ENCODE measurements at regions of chr19 and their contacts with region 1.

Region 1: DNA sequence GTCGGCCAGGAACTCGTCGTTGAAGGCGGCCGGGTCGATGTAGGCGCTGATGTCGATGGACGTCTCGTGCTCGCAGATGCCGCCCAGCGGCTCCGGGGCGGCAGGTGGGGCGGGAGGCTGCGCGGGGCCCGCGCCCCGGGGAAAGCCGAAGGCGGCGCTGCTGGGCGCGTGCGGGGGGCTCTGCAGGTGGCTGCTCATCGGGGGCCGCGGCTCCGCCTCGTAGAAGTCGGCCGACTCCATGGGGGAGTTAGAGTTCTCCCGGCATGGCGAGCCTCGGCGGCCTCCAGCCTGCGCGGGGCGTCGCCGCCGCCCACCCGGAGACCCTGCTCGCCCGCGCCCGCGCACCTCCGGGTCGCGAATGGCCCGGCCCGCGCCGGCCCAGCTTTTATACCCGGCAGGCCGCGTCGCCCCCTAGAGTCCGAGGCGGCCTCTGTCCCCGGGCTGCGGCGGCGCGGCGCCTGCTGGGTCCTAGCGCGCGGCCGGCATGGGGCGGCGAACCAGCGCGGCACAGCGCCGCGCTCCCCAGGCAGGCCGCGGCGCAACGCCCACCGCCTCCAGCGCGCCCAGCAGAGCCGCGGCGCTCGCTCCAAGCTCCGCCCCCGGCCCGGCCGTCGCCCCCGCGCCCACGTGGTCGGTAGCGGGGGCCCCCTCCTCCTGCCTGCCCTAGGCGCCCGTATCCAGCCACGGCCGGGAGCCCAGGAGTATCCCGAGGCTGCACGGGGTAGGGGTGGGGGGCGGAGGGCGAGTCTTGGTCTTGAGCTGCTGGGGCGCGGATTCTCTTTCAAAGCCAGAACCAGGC is at the start of gene CEBPA:
- DNase-seq: peak; percentile 70
- ATAC-seq: peak; percentile 93
- H3K4me3 ChIP-seq: peak within 1 kb of the TSS; percentile 70 to 82
- H3K27ac ChIP-seq: peak within 1 kb of the TSS; percentile 84
- H3K4me1 ChIP-seq: peaks cover 16 to 28% of the 10 kb centered on the region in 2 experiments; a peak in 3 of 4 replicates
- H3K27me3 ChIP-seq: no peaks in the 10 kb centered on the region
- CTCF ChIP-seq: peak in 2 of 3 experiments; percentile 24 to 59; a peak in 3 of 6 replicates
- POLR2A ChIP-seq: peak; percentile 99
- RAD21 ChIP-seq: no peak
- total RNA-seq, gene CEBPA: 7.0 TPM

Region 2: DNA sequence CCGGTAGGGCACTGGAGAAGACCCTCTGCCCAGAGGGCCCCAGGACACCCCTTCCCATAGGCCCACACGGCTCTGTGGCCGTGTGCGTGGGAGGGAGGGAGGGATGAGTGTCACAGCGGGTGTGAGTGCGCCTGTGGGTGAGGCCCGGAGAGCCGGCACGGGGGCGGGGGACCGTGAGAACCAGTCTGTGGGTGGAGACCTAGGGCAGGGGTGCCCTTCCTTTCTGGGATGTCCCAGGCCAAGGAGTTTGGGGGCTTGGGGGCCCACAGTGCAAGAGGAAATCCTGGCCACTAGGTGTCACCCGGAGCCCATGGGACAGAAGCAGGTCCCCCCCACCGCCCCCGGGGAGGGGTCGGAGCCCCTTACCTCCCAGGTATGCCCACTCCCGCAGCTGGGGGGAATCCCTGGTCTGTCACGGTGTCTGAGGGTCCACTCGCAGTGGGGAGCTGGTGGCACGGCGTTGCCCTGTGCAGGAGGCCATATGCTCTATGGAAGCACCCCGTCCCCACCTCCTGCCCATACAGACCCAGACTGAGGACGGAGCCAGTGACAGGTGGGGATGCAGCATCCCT is 60.8 kb before region 1 on chr19:
- CTCF ChIA-PET with region 1: no interaction called
- POLR2A ChIA-PET with region 1: no interaction called
- RAD21 ChIA-PET with region 1: no interaction called
- intact Hi-C with region 1: loop called (anchors 5 kb)
- DNase-seq: no peak
- ATAC-seq: peak; percentile 77
- H3K4me3 ChIP-seq: no peak overlapping the region
- H3K27ac ChIP-seq: no peak overlapping the region
- H3K4me1 ChIP-seq: peaks cover 0 to 11% of the 10 kb centered on the region in 2 experiments; a peak in 2 of 4 replicates
- H3K27me3 ChIP-seq: no peaks in the 10 kb centered on the region
- CTCF ChIP-seq: peak; percentile 61 to 82 (median 78)
- POLR2A ChIP-seq: no peak
- RAD21 ChIP-seq: peak; percentile 93

Region 3: DNA sequence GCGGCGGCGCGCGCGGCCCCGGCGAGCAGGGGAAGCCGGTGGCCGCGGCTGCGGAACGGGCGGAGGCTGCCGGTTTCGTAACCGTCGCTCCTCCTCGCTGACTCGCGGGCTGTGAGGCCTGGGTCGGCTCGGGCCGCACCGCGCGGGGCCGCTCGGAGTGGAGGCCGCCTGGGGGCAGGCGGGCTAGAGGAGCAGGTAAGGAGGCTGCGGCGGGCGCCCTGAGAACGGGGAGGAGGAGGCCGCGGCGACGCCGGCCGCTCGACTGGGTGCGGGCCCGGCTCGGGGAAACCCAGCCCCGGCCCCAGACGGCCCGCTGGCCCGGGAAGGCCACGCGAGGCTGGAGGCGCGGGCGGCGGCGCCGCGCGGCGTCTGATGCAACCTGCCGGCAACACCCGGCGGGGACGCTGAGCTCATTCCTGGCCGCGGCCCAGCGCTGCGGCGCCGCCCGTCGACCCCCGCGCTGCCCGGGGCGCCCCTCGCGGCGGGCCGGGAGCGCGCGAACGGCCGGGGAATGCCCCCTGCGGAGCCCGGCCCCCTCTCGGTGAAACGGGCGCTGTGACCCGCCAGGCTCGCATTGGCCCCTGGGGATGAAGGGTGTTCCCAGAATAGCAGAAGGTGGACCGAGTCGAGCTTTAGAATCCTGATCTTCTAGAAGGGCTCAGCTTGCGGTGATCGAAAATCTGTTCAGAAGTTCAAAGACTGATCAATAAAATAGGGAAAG is 71.5 kb after region 1 on chr19 and contains the start of gene CEBPG:
- CTCF ChIA-PET with region 1: interaction called, 7 read pairs
- POLR2A ChIA-PET with region 1: interaction called, 17 read pairs
- RAD21 ChIA-PET with region 1: no interaction called
- intact Hi-C with region 1: loop called (anchors 2 kb)
- DNase-seq: no peak
- ATAC-seq: peak; percentile 40
- H3K4me3 ChIP-seq: peak within 1 kb of the TSS; percentile 90 to 94
- H3K27ac ChIP-seq: peak within 1 kb of the TSS; percentile 93
- H3K4me1 ChIP-seq: peaks cover 30 to 49% of the 10 kb centered on the region in 2 experiments
- H3K27me3 ChIP-seq: no peaks in the 10 kb centered on the region
- CTCF ChIP-seq: no peak
- POLR2A ChIP-seq: peak; percentile 82
- RAD21 ChIP-seq: no peak
- total RNA-seq, gene CEBPG: 51.1 TPM